SK-N-SH (cell line): ENCODE measurements at regions of chr15 and their contacts with region 1.

Region 1: DNA sequence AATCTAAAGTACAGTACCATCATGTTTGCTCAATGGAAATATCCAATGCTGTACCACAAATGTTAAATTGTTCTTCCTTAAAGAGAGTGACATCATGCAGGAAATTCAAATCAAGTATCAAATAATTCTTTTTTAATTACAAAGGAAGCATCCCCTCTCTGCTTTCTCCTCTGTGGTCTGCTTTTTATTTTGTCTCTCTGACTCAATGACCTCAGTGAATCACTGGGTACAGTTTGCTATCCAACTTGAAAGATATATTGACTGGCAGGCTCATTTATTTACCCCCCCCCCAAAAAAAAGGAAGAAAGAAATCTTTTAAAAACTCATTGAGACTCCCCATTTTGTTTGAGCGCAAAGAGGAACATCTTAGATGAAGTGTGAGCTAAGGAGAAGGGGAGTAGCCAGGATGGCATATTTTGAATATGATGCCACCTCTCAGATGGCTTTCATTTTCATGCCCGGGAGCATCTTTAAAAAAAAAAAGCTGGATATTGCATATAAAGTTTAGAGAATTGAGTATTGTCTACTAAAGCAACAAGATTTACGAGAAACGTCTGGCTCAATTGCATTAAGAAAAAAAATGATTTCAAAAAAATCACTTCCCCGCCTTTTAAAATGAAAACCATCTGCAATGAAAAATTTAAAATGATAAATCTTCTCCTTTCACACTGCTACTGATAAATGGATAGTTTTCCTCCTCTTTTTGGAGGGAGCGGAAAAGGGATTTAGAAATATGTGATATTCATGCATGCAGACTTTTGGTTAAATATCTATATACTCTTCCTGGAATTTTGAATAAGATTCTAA is 307.1 kb upstream of the DPH6 start:
- DNase-seq: no peak
- H3K4me3 ChIP-seq: peak overlapping the region; percentile 12 to 17; a peak in 2 of 4 replicates
- H3K27ac ChIP-seq: peak overlapping the region; percentile 24 to 61; a peak in 3 of 4 replicates
- H3K4me1 ChIP-seq: peaks cover 9 to 17% of the 10 kb centered on the region in 2 experiments; a peak in 3 of 4 replicates
- H3K27me3 ChIP-seq: no peaks in the 10 kb centered on the region
- CTCF ChIP-seq: no peak
- EP300 ChIP-seq: peak; percentile 4 to 83; a peak in 2 of 4 replicates
- RAD21 ChIP-seq: no peak

Region 2: GRCh38 chr15:35867356-35867755 is 14.3 kb after region 1 on chr15:
- CTCF ChIA-PET with region 1: interaction called, 10 read pairs
- POLR2A ChIA-PET with region 1: no interaction called
- DNase-seq: no peak
- H3K4me3 ChIP-seq: no peak overlapping the region
- H3K27ac ChIP-seq: no peak overlapping the region
- H3K4me1 ChIP-seq: peaks cover 4 to 8% of the 10 kb centered on the region in 2 experiments; a peak in 2 of 4 replicates
- H3K27me3 ChIP-seq: no peaks in the 10 kb centered on the region
- CTCF ChIP-seq: no peak
- EP300 ChIP-seq: no peak
- RAD21 ChIP-seq: no peak